Posterior vena cava (tissue), 2 donors: ENCODE measurements at regions of chr12 and their contacts with region 1.

Region 1: GRCh38 chr12:15789220-15790171 is at the start of gene EPS8:
- DNase-seq: peak; percentile 97
- total RNA-seq, gene EPS8: 107 to 144 TPM

Region 2: GRCh38 chr12:15590180-15590826 is 199.2 kb before region 1 on chr12:
- intact Hi-C with region 1: loop called in 1 of 2 experiments (anchors 10 kb)
- DNase-seq: no peak

Region 3: GRCh38 chr12:15728118-15728598 is 61.3 kb before region 1 on chr12:
- intact Hi-C with region 1: loop called in 1 of 2 experiments (anchors 10 kb)
- DNase-seq: no peak

Region 4: GRCh38 chr12:15842108-15842507 is 52.6 kb after region 1 on chr12:
- intact Hi-C with region 1: loop called in 1 of 2 experiments (anchors 10 kb)
- DNase-seq: no peak